ENCODE measurements at regions of chr19 and their contacts with region 1.

Region 1: DNA sequence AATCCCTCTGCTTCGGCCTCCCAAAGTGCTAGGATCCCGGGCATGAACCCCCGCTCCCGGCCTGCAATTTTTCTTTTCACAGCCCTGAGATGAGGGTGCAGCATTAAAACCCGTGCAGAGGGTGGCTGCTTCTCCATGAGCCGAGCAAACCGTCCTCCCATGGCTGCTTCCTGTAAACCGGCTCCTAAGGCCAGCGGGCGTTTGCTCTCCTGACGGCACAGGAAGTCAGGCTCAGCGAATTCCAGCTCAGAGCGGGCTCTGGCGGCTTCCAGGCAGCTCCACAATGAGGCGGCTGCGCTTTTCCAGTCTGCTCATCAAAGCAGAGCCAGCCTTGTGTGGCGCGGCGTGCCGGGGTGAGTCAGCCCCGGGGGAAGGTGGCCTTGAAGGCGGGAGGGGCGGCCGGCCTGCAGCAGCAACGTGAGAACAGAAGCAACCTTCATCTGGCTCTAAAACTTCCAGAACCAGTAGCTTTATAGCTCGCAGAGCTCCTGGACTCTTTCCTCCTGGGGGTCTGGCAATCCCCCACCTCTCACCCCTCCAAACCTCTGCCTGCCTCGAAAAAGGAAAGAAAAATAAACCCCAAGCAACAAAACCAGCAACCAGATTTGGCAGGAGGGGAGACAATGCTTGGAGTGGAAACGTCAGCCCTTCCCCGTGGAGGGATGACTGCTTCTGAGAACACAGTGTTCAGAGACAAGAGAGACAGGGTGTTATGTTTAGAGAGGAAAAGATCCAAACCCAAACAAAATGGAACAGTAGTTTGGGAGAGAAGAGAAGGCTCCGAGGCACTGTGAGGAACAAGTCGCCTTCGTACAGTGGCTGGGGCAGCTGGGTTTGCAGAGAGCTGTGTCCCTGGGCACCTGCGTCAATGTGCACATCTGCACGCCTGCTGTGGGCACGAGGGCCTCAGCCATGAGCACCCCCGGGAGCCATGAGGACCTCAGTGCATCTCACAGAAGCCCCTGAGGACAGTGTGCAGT is 67.8 kb downstream of the GADD45B start:
- DNase-seq: peak; percentile 84
- ATAC-seq: peak; percentile 97
- H3K4me3 Mint-ChIP-seq: peak overlapping the region; percentile 21
- H3K27ac Mint-ChIP-seq: peak overlapping the region; percentile 7
- H3K4me1 Mint-ChIP-seq: peaks cover 9% of the 10 kb centered on the region
- H3K27me3 Mint-ChIP-seq: no peaks in the 10 kb centered on the region

Region 2: GRCh38 chr19:2575734-2576481 is 32.2 kb after region 1 on chr19:
- CTCF ChIA-PET with region 1: no interaction called
- POLR2A ChIA-PET with region 1: no interaction called
- intact Hi-C with region 1: no loop called
- DNase-seq: no peak
- ATAC-seq: no peak
- H3K4me3 Mint-ChIP-seq: no peak overlapping the region
- H3K27ac Mint-ChIP-seq: no peak overlapping the region
- H3K4me1 Mint-ChIP-seq: no peaks in the 10 kb centered on the region
- H3K27me3 Mint-ChIP-seq: peaks cover 4% of the 10 kb centered on the region

Region 3: GRCh38 chr19:3068071-3068470 is 524.3 kb after region 1 on chr19:
- CTCF ChIA-PET with region 1: no interaction called
- POLR2A ChIA-PET with region 1: interaction called, 17 read pairs
- intact Hi-C with region 1: no loop called
- DNase-seq: no peak
- ATAC-seq: no peak
- H3K4me3 Mint-ChIP-seq: no peak overlapping the region
- H3K27ac Mint-ChIP-seq: no peak overlapping the region
- H3K4me1 Mint-ChIP-seq: peaks cover 8% of the 10 kb centered on the region
- H3K27me3 Mint-ChIP-seq: no peaks in the 10 kb centered on the region